ENCODE measurements at regions of chr1 and their contacts with region 1.

Region 1: GRCh38 chr1:45892068-45892785 is 88.8 kb downstream of the MAST2 start:
- DNase-seq: no peak
- H3K4me3 ChIP-seq: no peak overlapping the region
- H3K4me1 ChIP-seq: peaks cover 10% of the 10 kb centered on the region
- H3K27me3 ChIP-seq: no peaks in the 10 kb centered on the region

Region 2: DNA sequence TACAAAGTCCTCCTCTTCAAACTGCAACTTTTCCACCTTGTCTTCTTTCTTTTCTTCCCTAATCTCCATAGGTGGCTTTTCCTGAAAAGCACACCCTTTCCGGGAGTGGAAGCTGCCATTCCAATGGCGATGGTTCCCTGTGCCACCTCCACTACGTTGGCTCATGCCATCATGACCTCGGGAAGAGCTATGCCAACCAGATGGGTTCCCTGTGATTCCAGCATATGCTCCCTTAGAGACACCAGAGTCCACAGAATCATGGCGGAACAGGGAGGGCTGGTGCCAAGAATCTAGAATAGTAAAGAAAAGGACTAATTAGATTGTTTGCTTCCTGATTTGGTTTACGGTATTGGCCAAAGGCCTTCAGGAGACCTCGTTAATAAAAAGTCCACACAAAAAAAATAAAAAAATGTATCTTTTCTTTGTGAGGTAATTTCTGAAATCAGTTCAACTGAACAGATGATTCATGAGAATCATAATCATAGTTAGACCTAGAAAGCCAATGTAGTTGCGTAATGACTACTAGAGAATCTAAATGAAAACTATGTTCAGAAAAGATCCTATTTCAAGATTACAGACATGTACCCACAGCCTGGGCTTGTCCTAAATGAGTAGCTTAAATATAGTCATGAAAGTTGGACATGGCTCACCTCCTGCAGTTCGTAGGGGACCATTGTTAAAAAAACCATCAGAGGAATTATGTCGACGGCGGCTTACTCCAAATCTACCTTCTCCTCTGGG is 237.5 kb before region 1 on chr1:
- in situ Hi-C with region 1: loop called (anchors 25 kb)
- DNase-seq: no peak
- H3K4me3 ChIP-seq: no peak overlapping the region
- H3K4me1 ChIP-seq: peaks cover 13% of the 10 kb centered on the region
- H3K27me3 ChIP-seq: no peaks in the 10 kb centered on the region